Heart left ventricle (tissue), 16 donors: ENCODE measurements at regions of chr6 and their contacts with region 1.

Region 1: GRCh38 chr6:28136585-28137504 is 4.8 kb upstream of the ZKSCAN8 start:
- DNase-seq: peak; percentile 91 to 95 (median 94)
- ATAC-seq: peak; percentile 76 to 94 (median 92)
- H3K4me3 ChIP-seq: peak overlapping the region; percentile 53 to 97 (median 86)
- H3K27ac ChIP-seq: peak overlapping the region; percentile 90 to 98 (median 96)
- H3K4me1 ChIP-seq: peaks cover 0 to 54% (median 23%) of the 10 kb centered on the region in 12 donors
- H3K27me3 ChIP-seq: no peaks in the 10 kb centered on the region
- CTCF ChIP-seq: peak in 1 of 12 donors; percentile 2
- POLR2A ChIP-seq: peak in 1 of 2 donors; percentile 25

Region 2: GRCh38 chr6:28161410-28162079 is 24.7 kb after region 1 on chr6:
- intact Hi-C with region 1: loop called in 1 of 10 experiments (anchors 1 kb)
- DNase-seq: peak; percentile 61 to 90 (median 76)
- ATAC-seq: peak; percentile 76 to 96 (median 92)
- H3K4me3 ChIP-seq: peak overlapping the region; percentile 1 to 63 (median 54)
- H3K27ac ChIP-seq: peak overlapping the region in 3 of 12 donors; percentile 4 to 16 (median 11)
- H3K4me1 ChIP-seq: peaks cover 0 to 9% (median 5%) of the 10 kb centered on the region in 12 donors
- H3K27me3 ChIP-seq: no peaks in the 10 kb centered on the region
- CTCF ChIP-seq: no peak
- POLR2A ChIP-seq: peak in 1 of 2 donors; percentile 34

Region 3: DNA sequence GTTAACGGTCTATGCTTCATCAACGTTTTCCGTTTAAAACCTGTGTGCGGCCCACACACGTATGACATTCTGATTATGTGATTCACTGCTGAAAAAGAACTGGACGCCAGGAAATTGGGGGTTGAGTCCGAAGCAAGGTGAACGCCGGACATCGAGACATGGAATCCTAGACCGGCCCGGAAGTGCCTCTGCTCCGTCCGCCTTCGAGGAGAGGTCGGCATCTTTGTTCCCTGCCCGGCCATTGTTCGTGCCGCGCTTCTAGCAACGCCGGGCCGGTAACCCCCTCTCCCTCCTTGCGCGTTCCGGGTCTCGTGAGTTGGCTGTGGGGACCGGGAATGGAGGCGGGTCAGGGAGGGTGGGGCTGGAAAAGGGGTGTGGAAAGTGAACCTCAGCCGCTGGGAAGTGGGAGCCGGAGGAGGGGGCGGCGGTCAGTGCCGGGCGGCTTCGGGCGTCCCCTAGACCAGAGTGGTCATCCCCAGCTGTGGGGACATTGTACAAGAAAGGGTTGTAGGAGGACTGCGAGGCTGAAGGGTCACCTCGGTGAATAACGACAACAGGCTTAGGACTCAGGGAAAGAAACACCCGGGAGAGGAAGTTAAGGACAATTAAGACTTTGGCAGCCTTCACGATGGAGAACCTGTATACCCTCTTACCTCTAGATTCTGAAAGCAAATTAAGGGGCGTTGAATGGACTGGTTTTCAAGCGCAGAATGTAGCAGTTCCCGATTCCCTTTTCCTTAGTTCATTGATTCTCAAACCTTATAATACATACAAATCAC is 88.4 kb after region 1 on chr6 and contains the start of gene ZSCAN9:
- intact Hi-C with region 1: loop called in 5 of 10 experiments (anchors 5 to 10 kb)
- DNase-seq: peak; percentile 85 to 92 (median 89)
- ATAC-seq: peak; percentile 96 to 99 (median 98)
- H3K4me3 ChIP-seq: peak within 1 kb of the TSS; percentile 70 to 93 (median 78)
- H3K27ac ChIP-seq: peak within 1 kb of the TSS; percentile 3 to 87 (median 82)
- H3K4me1 ChIP-seq: peaks cover 0 to 26% (median 12%) of the 10 kb centered on the region in 12 donors
- H3K27me3 ChIP-seq: peaks cover 0 to 19% (median 7%) of the 10 kb centered on the region in 9 donors
- CTCF ChIP-seq: no peak
- POLR2A ChIP-seq: no peak
- total RNA-seq, gene ZSCAN9: 6.8 to 12.6 (median 7.9) TPM

Region 4: GRCh38 chr6:28266962-28267694 is 130.3 kb after region 1 on chr6 and contains the start of gene ZSCAN26:
- intact Hi-C with region 1: loop called in 3 of 10 experiments (anchors 5 kb)
- DNase-seq: peak; percentile 79 to 88 (median 87)
- ATAC-seq: peak; percentile 92 to 99 (median 98)
- H3K4me3 ChIP-seq: peak within 1 kb of the TSS; percentile 29 to 88 (median 76)
- H3K27ac ChIP-seq: peak within 1 kb of the TSS; percentile 45 to 93 (median 87)
- H3K4me1 ChIP-seq: peaks cover 0 to 35% (median 12%) of the 10 kb centered on the region in 12 donors
- H3K27me3 ChIP-seq: no peaks in the 10 kb centered on the region
- CTCF ChIP-seq: peak in 1 of 12 donors; percentile 14
- POLR2A ChIP-seq: peak in 1 of 2 donors; percentile 53
- total RNA-seq, gene ZSCAN26: 9.8 to 16.4 (median 12.2) TPM

Region 5: GRCh38 chr6:28349892-28350737 is 213.3 kb after region 1 on chr6 and contains the start of gene ZKSCAN3:
- intact Hi-C with region 1: loop called in 8 of 10 experiments (anchors 2 to 5 kb)
- DNase-seq: peak; percentile 80 to 91 (median 88)
- ATAC-seq: peak; percentile 84 to 96 (median 96)
- H3K4me3 ChIP-seq: peak within 1 kb of the TSS; percentile 38 to 89 (median 71)
- H3K27ac ChIP-seq: peak within 1 kb of the TSS; percentile 12 to 84 (median 78)
- H3K4me1 ChIP-seq: peaks cover 0 to 42% (median 25%) of the 10 kb centered on the region in 12 donors
- H3K27me3 ChIP-seq: no peaks in the 10 kb centered on the region
- CTCF ChIP-seq: no peak
- POLR2A ChIP-seq: peak in 1 of 2 donors; percentile 28
- total RNA-seq, gene ZKSCAN3: 2.8 to 7.9 (median 5.6) TPM

Region 6: GRCh38 chr6:28824793-28825731 is 688.2 kb after region 1 on chr6:
- intact Hi-C with region 1: no loop called
- DNase-seq: no peak
- ATAC-seq: no peak
- H3K4me3 ChIP-seq: no peak overlapping the region
- H3K27ac ChIP-seq: no peak overlapping the region
- H3K4me1 ChIP-seq: peaks cover 0 to 9% (median 0%) of the 10 kb centered on the region in 12 donors
- H3K27me3 ChIP-seq: peaks cover 30 to 98% (median 74%) of the 10 kb centered on the region in 9 donors
- CTCF ChIP-seq: no peak
- POLR2A ChIP-seq: no peak